ENCODE measurements at regions of chr11 and their contacts with region 1.

Region 1: GRCh38 chr11:250740-251299 is 14.0 kb downstream of the PSMD13 start:
- DNase-seq: peak; percentile 65 to 86 (median 71)
- H3K4me3 ChIP-seq: no peak overlapping the region
- H3K4me3 Mint-ChIP-seq: peak overlapping the region in 1 of 7 donors; percentile 5
- H3K27ac ChIP-seq: no peak overlapping the region
- H3K27ac Mint-ChIP-seq: peak overlapping the region in 7 of 8 donors; percentile 62 to 90 (median 73)
- H3K4me1 ChIP-seq: peaks cover 5% of the 10 kb centered on the region
- H3K4me1 Mint-ChIP-seq: peaks cover 7 to 11% (median 9%) of the 10 kb centered on the region in 3 donors
- H3K27me3 ChIP-seq: no peaks in the 10 kb centered on the region
- H3K27me3 Mint-ChIP-seq: no peaks in the 10 kb centered on the region

Region 2: GRCh38 chr11:236774-237767 is 13.7 kb before region 1 on chr11 and contains the start of gene PSMD13:
- CTCF ChIA-PET with region 1: interaction called, 20 read pairs
- POLR2A ChIA-PET with region 1: no interaction called
- DNase-seq: peak; percentile 83 to 91 (median 88)
- H3K4me3 ChIP-seq: peak within 1 kb of the TSS; percentile 95
- H3K4me3 Mint-ChIP-seq: peak within 1 kb of the TSS; percentile 95 to 100 (median 97)
- H3K27ac ChIP-seq: peak within 1 kb of the TSS; percentile 100
- H3K27ac Mint-ChIP-seq: peak within 1 kb of the TSS; percentile 98 to 100 (median 100)
- H3K4me1 ChIP-seq: peaks cover 24% of the 10 kb centered on the region
- H3K4me1 Mint-ChIP-seq: peaks cover 39 to 71% (median 53%) of the 10 kb centered on the region in 3 donors
- H3K27me3 ChIP-seq: no peaks in the 10 kb centered on the region
- H3K27me3 Mint-ChIP-seq: peaks cover 0 to 4% of the 10 kb centered on the region in 2 donors
- total RNA-seq, gene PSMD13: 235 to 237 TPM

Region 3: DNA sequence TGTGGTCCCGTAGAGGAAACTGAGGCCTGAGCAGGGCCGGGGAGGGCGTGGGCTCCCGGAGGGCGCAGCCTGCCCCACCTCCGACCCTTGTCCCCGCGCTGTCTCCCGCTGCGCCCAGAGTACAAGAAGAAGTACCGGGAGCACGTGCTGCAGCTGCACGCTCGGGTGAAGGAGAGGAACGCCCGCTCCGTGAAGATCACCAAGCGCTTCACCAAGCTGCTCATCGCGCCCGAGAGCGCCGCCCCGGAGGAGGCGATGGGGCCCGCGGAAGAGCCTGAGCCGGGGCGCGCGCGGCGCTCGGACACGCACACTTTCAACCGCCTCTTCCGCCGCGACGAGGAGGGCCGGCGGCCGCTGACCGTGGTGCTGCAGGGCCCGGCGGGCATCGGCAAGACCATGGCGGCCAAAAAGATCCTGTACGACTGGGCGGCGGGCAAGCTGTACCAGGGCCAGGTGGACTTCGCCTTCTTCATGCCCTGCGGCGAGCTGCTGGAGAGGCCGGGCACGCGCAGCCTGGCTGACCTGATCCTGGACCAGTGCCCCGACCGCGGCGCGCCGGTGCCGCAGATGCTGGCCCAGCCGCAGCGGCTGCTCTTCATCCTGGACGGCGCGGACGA is 29.3 kb after region 1 on chr11:
- CTCF ChIA-PET with region 1: interaction called, 58 read pairs
- POLR2A ChIA-PET with region 1: interaction called, 16 read pairs
- DNase-seq: peak in 2 of 5 donors; percentile 47 to 71
- H3K4me3 ChIP-seq: peak overlapping the region; percentile 50
- H3K4me3 Mint-ChIP-seq: peak overlapping the region; percentile 77 to 91 (median 84)
- H3K27ac ChIP-seq: no peak overlapping the region
- H3K27ac Mint-ChIP-seq: peak overlapping the region in 5 of 8 donors; percentile 19 to 85 (median 54)
- H3K4me1 ChIP-seq: peaks cover 47% of the 10 kb centered on the region
- H3K4me1 Mint-ChIP-seq: peaks cover 42 to 58% (median 50%) of the 10 kb centered on the region in 3 donors
- H3K27me3 ChIP-seq: no peaks in the 10 kb centered on the region
- H3K27me3 Mint-ChIP-seq: no peaks in the 10 kb centered on the region

Region 4: DNA sequence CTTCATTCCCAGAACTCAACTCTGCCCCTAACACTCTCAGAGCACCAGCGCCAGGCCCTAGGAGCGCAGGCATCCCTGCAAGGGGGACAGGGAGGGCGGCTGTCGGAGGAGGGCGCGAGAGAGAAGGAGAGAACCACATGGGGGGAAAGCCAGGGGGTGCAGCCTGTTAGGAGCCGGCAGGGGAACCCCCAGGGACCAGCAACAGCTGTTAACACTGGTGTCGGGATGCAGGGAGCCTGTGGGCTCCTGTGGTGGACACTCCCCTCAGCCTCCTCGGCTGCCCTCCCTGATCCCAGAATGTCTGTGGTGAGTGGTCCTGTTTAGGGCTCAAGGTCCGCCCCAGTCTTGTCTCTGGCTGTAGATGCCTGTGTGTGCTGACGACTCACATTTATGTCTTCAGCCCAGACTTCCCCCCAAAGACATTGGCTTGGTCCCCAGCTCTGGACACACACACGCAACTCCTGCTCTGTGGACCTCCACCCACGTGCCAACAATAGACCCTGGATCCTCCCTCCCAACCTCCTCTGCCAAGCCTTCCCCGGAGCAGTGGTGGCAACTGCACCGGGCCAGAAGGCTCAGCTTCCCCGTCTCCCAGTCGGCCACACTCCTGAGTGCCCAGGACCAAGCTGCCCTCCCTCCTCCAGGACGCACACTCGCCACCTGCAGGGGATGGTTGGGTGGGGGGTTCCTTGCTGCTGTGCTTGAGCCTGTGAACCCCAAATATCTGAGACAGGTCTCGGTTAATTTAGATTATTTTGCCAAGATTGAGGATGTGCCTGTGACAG is 49.3 kb after region 1 on chr11:
- CTCF ChIA-PET with region 1: interaction called, 30 read pairs
- POLR2A ChIA-PET with region 1: no interaction called
- DNase-seq: peak in 1 of 5 donors; percentile 55
- H3K4me3 ChIP-seq: no peak overlapping the region
- H3K4me3 Mint-ChIP-seq: no peak overlapping the region
- H3K27ac ChIP-seq: no peak overlapping the region
- H3K27ac Mint-ChIP-seq: peak overlapping the region in 3 of 8 donors; percentile 0 to 32 (median 3)
- H3K4me1 ChIP-seq: peaks cover 22% of the 10 kb centered on the region
- H3K4me1 Mint-ChIP-seq: peaks cover 25 to 43% (median 26%) of the 10 kb centered on the region in 3 donors
- H3K27me3 ChIP-seq: no peaks in the 10 kb centered on the region
- H3K27me3 Mint-ChIP-seq: peaks cover 0 to 5% of the 10 kb centered on the region in 2 donors

Region 5: GRCh38 chr11:316031-316701 is 65.3 kb after region 1 on chr11:
- CTCF ChIA-PET with region 1: interaction called, 11 read pairs
- POLR2A ChIA-PET with region 1: no interaction called
- DNase-seq: peak in 2 of 5 donors; percentile 35 to 54
- H3K4me3 ChIP-seq: peak overlapping the region; percentile 98
- H3K4me3 Mint-ChIP-seq: peak overlapping the region; percentile 85 to 99 (median 91)
- H3K27ac ChIP-seq: peak overlapping the region; percentile 88
- H3K27ac Mint-ChIP-seq: peak overlapping the region; percentile 90 to 100 (median 98)
- H3K4me1 ChIP-seq: peaks cover 37% of the 10 kb centered on the region
- H3K4me1 Mint-ChIP-seq: peaks cover 49 to 65% (median 58%) of the 10 kb centered on the region in 3 donors
- H3K27me3 ChIP-seq: no peaks in the 10 kb centered on the region
- H3K27me3 Mint-ChIP-seq: peaks cover 0 to 6% of the 10 kb centered on the region in 2 donors

Region 6: DNA sequence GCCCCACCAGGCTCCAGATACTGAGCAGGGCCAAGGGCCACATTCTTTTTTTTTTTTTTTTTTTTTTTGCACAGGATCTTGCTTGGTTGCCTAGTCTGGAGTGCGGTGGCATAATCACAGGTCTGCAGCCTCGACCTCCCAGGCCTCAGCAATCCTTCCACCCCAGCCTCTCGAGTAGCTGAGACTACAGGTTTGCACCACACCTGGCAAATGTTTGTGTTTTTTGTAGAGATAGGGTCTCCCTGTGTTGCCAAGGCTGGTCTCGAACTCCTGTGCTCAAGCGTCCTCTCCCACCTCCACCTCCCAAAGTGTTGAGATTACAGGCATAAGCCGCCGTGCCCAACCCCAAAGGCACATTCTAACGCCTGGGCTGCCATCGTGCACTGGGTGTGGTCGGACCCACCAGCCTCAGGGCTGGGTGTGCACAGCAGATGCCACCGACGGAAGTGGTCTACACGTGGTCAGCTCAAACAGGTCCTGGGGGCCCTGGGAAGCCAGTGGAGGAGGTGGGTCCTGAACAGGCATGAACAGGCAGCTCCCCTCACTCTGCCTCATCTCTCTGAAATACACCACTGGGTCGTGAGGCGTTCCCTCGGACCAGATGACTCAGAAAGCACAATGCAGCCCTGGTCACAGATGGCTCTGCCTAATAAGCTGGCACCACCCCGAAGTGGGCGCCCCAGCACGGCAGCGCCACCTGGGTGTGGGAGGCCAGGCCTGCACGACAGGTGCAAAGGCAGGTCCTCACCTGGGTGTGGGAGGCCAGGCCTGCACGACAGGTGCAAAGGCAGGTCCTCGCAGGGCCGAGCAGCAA is 113.3 kb after region 1 on chr11:
- CTCF ChIA-PET with region 1: interaction called, 24 read pairs
- POLR2A ChIA-PET with region 1: interaction called, 3 read pairs
- DNase-seq: peak; percentile 58 to 81 (median 65)
- H3K4me3 ChIP-seq: peak overlapping the region; percentile 20
- H3K4me3 Mint-ChIP-seq: peak overlapping the region in 6 of 7 donors; percentile 17 to 74 (median 40)
- H3K27ac ChIP-seq: no peak overlapping the region
- H3K27ac Mint-ChIP-seq: peak overlapping the region in 6 of 8 donors; percentile 58 to 79 (median 68)
- H3K4me1 ChIP-seq: peaks cover 28% of the 10 kb centered on the region
- H3K4me1 Mint-ChIP-seq: peaks cover 19 to 27% (median 21%) of the 10 kb centered on the region in 3 donors
- H3K27me3 ChIP-seq: peaks cover 24% of the 10 kb centered on the region
- H3K27me3 Mint-ChIP-seq: peaks cover 23 to 31% of the 10 kb centered on the region in 2 donors

Region 7: GRCh38 chr11:447923-448731 is 197.3 kb after region 1 on chr11:
- CTCF ChIA-PET with region 1: interaction called, 39 read pairs
- POLR2A ChIA-PET with region 1: no interaction called
- DNase-seq: peak; percentile 90 to 96 (median 93)
- H3K4me3 ChIP-seq: peak overlapping the region; percentile 76
- H3K4me3 Mint-ChIP-seq: peak overlapping the region; percentile 88 to 97 (median 90)
- H3K27ac ChIP-seq: peak overlapping the region; percentile 79
- H3K27ac Mint-ChIP-seq: peak overlapping the region; percentile 94 to 98 (median 98)
- H3K4me1 ChIP-seq: peaks cover 22% of the 10 kb centered on the region
- H3K4me1 Mint-ChIP-seq: peaks cover 15 to 30% (median 25%) of the 10 kb centered on the region in 3 donors
- H3K27me3 ChIP-seq: no peaks in the 10 kb centered on the region
- H3K27me3 Mint-ChIP-seq: peaks cover 0 to 2% of the 10 kb centered on the region in 2 donors

Measured in CD8-positive, alpha-beta memory T cell (primary cell).